Posterior vena cava (tissue), 2 donors: ENCODE measurements at regions of chr6 and their contacts with region 1.

Region 1: GRCh38 chr6:39688494-39688893 is 36.7 kb downstream of the KIF6 start:
- DNase-seq: no peak

Region 2: GRCh38 chr6:39391182-39391581 is 297.3 kb before region 1 on chr6:
- intact Hi-C with region 1: loop called in 1 of 2 experiments (anchors 10 kb)
- DNase-seq: no peak

Region 3: GRCh38 chr6:39760226-39760952 is 71.9 kb after region 1 on chr6:
- intact Hi-C with region 1: no loop called
- DNase-seq: no peak

Region 4: DNA sequence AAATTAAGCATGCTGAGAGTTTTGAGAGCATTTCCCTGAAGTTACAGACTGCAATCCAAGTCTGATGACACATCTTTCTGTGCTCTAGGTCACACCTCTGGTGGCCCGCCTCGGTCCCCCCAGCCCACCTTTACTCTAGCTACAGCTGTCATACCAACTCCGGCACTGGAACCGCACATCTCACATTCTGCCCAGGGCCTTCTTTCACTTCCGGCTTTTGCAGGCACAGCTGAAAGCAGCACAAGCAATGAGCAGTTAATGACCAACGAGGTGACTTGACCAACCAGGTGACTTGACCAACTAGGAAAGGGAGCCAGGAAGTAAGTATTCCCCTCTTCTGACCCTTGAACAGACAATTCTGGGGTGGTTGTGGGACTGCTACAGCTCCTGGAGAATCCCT is 334.4 kb after region 1 on chr6:
- intact Hi-C with region 1: no loop called
- DNase-seq: no peak